Activated B cell treated with CpG ODN at 0.5 μM for 24 hours (primary cell): ENCODE measurements at regions of chr18 and their contacts with region 1.

Region 1: DNA sequence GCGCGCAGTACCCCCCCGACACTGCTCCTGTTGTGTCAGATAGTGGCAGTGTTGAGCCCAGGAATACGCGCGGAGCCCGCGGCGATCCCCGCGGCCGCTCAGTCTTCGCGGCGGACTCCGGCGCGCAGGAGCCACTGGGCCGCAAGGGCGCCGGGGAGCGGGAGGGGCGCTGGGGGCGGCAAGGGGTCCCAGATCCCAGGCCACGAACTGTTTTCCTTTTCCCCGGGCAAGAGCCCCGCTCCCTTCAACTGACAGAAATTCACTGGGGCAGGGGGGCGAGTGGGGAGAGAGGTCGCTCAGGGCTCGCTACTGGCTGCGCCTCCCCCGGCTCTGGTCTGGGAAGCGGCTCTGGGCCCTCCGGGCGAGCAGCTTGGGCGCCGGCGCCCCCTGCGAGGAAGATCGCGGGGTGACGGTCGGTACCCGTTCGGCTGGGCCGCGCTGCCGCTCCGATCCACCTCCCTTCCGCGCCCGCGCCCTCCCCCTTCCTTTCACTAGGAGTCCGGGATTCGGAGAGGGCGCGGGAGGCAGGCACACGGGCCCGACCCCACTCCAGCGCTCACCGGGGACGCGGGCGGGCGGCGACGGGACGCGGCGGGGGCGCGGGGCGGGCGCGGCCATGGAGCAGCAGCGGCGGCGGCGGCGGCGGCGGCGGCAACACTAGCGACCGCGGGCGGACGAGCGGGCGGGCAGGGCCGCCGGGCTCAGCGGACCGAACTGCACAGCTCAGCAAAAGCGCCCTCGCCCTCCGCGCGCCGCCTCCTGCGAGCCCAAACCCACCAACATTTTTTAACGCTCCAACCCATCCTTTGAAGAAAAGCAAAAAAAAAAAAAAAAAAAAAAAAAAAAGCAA is 1.4 kb upstream of the SETBP1 start:
- DNase-seq: peak; percentile 83
- ATAC-seq: peak; percentile 81
- H3K4me3 Mint-ChIP-seq: peak overlapping the region; percentile 75
- H3K27ac Mint-ChIP-seq: peak overlapping the region; percentile 63
- H3K4me1 Mint-ChIP-seq: peaks cover 9% of the 10 kb centered on the region
- H3K27me3 Mint-ChIP-seq: no peaks in the 10 kb centered on the region
- CTCF ChIP-seq: no peak

Region 2: DNA sequence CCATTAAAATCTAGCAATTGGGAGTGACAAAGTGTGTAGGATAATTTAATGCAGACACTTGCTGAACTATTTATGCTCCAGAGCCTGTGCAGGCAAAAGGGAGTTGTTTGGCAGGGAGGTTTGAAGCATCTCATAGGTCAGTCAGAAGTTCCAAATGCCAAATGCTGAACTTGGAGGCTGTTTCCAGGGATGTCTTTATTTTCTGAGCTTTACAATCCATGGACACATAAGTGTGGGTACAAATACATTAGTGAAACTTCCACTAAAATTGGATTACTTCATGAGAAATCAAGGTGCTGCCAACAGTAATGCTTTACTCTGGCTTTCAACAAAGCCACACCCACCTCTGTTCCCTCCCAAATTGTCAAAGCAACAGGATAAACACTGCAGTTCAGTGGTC is 420.7 kb before region 1 on chr18:
- CTCF ChIA-PET with region 1: no interaction called
- POLR2A ChIA-PET with region 1: no interaction called
- intact Hi-C with region 1: no loop called
- DNase-seq: no peak
- ATAC-seq: no peak
- H3K4me3 Mint-ChIP-seq: no peak overlapping the region
- H3K27ac Mint-ChIP-seq: no peak overlapping the region
- H3K4me1 Mint-ChIP-seq: no peaks in the 10 kb centered on the region
- H3K27me3 Mint-ChIP-seq: peaks cover 3% of the 10 kb centered on the region
- CTCF ChIP-seq: no peak

Region 3: GRCh38 chr18:44725300-44726096 is 46.2 kb after region 1 on chr18:
- CTCF ChIA-PET with region 1: interaction called, 11 read pairs
- POLR2A ChIA-PET with region 1: interaction called, 111 read pairs
- intact Hi-C with region 1: loop called (anchors 1 kb)
- DNase-seq: peak; percentile 41
- ATAC-seq: peak; percentile 59
- H3K4me3 Mint-ChIP-seq: peak overlapping the region; percentile 70
- H3K27ac Mint-ChIP-seq: peak overlapping the region; percentile 88
- H3K4me1 Mint-ChIP-seq: peaks cover 99% of the 10 kb centered on the region
- H3K27me3 Mint-ChIP-seq: no peaks in the 10 kb centered on the region
- CTCF ChIP-seq: no peak

Region 4: DNA sequence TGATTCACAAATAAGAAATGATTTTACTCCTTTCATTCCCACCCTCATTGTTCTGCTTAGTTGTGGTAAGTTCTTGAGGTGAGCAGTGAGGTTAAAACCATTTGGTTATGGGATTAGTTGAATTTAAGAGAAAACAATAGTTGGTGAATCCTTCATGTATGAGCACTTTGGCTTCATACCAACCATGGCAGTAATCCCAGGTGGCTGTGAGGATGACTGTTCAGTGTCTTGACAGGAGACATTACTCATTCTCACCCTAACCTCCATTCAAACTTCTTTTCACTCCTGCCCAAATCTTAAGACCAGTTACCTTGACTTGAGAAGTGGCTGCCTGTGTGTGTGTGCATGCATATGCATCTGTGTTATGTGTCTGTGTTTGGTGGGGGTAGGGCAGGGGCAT is 144.5 kb after region 1 on chr18:
- CTCF ChIA-PET with region 1: interaction called, 3 read pairs
- POLR2A ChIA-PET with region 1: interaction called, 15 read pairs
- intact Hi-C with region 1: loop called (anchors 1 kb)
- DNase-seq: no peak
- ATAC-seq: peak; percentile 38
- H3K4me3 Mint-ChIP-seq: no peak overlapping the region
- H3K27ac Mint-ChIP-seq: no peak overlapping the region
- H3K4me1 Mint-ChIP-seq: peaks cover 67% of the 10 kb centered on the region
- H3K27me3 Mint-ChIP-seq: no peaks in the 10 kb centered on the region
- CTCF ChIP-seq: no peak

Region 5: DNA sequence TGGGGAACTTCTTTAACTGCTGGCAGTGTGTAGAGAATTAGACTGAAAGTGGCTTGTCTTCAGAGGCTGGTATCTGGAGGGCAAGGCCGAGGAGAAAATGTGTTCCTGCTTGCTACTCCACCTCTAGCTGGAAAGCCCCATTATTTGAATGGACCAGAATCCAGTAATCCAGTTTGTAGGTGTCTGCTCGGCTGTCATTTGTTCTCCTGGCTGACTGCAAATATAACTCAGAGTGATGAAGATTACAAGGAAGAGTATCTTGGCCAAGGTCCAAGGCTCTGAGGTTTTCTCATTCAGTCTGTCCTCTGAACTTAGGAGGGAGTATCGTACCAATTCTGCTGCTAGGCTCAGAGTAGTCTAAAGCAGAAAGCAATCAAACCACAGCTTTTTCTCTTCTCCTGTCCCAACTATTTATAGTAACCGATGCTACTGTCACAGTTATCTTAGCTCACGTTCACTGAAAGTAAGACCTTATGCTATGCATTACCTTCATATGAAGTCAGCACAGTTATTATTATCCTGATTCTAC is 230.0 kb after region 1 on chr18:
- CTCF ChIA-PET with region 1: no interaction called
- POLR2A ChIA-PET with region 1: interaction called, 12 read pairs
- intact Hi-C with region 1: no loop called
- DNase-seq: no peak
- ATAC-seq: peak; percentile 75
- H3K4me3 Mint-ChIP-seq: peak overlapping the region; percentile 50
- H3K27ac Mint-ChIP-seq: peak overlapping the region; percentile 82
- H3K4me1 Mint-ChIP-seq: peaks cover 55% of the 10 kb centered on the region
- H3K27me3 Mint-ChIP-seq: no peaks in the 10 kb centered on the region
- CTCF ChIP-seq: no peak

Region 6: DNA sequence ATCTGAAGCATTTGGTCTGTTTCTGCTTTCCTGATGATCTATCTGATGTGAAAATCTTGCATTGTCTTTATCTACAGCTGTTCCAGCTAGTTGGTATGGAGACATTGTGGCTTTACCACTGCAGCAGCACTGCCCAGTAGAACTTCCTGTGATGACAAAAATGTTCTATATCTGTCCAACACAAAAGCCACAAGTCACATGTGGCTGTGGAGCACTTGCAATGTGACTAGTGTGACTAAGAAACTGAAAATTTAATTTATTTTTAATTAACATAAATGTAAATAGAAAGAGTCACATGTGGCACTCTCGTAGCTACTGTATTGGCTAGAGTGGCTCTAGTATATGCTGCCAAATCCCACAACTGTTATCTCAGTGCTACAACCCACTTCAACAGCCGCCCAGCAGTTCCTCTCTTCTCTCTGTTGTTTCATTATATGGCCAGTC is 427.1 kb after region 1 on chr18:
- CTCF ChIA-PET with region 1: interaction called, 3 read pairs
- POLR2A ChIA-PET with region 1: interaction called, 20 read pairs
- intact Hi-C with region 1: loop called (anchors 1 kb)
- DNase-seq: peak; percentile 17
- ATAC-seq: peak; percentile 56
- H3K4me3 Mint-ChIP-seq: peak overlapping the region; percentile 21
- H3K27ac Mint-ChIP-seq: no peak overlapping the region
- H3K4me1 Mint-ChIP-seq: peaks cover 2% of the 10 kb centered on the region
- H3K27me3 Mint-ChIP-seq: no peaks in the 10 kb centered on the region
- CTCF ChIP-seq: no peak

Region 7: GRCh38 chr18:45670281-45670962 is 991.1 kb after region 1 on chr18:
- CTCF ChIA-PET with region 1: no interaction called
- POLR2A ChIA-PET with region 1: no interaction called
- intact Hi-C with region 1: loop called (anchors 5 kb)
- DNase-seq: no peak
- ATAC-seq: peak; percentile 59
- H3K4me3 Mint-ChIP-seq: peak overlapping the region; percentile 39
- H3K27ac Mint-ChIP-seq: peak overlapping the region; percentile 33
- H3K4me1 Mint-ChIP-seq: peaks cover 33% of the 10 kb centered on the region
- H3K27me3 Mint-ChIP-seq: no peaks in the 10 kb centered on the region
- CTCF ChIP-seq: no peak